BJ (cell line): ENCODE measurements at regions of chr2 and their contacts with region 1.

Region 1: GRCh38 chr2:231674587-231675338 is 33.6 kb upstream of the PTMA start:
- DNase-seq: no peak
- H3K4me3 ChIP-seq: no peak overlapping the region
- H3K27me3 ChIP-seq: no peaks in the 10 kb centered on the region
- CTCF ChIP-seq: peak; percentile 97

Region 2: GRCh38 chr2:231522799-231523180 is 152.0 kb before region 1 on chr2:
- CTCF ChIA-PET with region 1: no interaction called
- POLR2A ChIA-PET with region 1: no interaction called
- DNase-seq: no peak
- H3K4me3 ChIP-seq: no peak overlapping the region
- H3K27me3 ChIP-seq: peaks cover 7% of the 10 kb centered on the region
- CTCF ChIP-seq: no peak

Region 3: DNA sequence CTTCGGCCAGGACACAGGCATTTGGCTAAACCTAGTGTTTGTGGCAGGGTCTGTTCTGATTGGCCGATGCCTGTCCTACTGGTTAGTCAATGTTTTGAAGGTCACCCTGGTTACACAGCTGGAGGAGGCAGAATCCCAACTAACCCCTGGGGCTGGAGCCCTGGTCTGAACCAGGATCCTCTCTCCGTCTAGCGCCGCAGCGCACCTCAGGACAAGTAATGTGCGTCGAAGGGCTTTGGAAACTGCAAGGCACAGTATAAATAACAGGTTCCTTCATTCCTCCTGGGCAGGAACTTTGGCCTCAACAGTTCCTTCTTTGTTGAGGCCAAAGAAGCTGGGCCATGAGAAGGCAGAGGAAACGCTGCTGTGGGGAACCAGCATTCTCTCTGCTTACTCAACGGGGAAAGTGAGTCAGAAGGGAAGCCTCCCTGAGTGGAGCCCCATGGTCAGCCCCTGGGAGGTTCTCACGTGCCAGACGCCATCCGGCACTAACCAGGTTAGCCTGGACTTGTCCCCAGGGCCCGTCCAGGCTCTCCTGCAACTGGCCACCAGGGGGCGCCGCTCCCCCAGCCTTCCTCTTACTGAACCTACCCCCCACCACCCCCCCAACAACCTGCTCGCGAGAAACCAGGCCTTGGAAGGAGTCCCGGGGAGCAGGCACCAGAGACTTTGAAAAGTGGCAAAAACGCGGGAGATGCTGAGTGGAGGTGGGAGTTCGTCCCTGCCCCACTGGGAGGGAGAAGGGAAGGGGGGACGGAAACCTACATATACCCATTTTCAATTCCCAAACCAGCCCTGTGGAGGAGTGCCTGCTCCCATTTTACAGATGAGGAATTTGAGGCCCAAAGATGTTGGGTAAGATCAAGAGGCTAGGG is 62.3 kb before region 1 on chr2:
- CTCF ChIA-PET with region 1: interaction called, 409 read pairs
- POLR2A ChIA-PET with region 1: interaction called, 4 read pairs
- DNase-seq: peak; percentile 74
- H3K4me3 ChIP-seq: no peak overlapping the region
- H3K27me3 ChIP-seq: no peaks in the 10 kb centered on the region
- CTCF ChIP-seq: peak; percentile 97

Region 4: DNA sequence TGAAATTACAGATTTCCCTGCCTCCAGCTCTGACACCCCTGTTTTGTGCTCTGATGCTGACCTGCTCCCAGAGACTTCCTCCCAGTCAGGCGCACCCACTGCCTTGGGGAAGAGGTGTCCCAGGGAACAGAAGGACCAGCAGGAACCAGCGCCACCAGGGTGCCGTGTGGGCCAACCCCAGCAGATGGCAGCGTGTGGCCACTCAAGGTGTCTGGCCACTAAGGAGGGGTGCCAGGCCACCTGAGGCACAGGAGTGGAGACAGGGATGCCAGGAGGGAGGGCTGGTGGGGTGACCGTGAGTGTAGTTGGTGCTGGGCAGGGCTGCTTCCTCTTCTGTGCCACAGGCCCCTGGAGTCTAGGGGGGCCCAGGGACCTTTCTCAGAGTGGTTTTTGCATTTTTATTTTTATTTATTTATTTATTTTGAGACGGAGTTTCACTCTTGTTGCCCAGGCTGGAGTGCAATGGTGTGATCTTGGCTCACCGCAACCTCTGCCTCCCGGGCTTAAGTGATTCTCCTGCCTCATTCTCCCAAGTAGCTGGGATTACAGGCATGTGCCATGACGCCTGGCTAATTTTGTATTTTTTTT is 26.1 kb before region 1 on chr2:
- CTCF ChIA-PET with region 1: interaction called, 117 read pairs
- POLR2A ChIA-PET with region 1: no interaction called
- DNase-seq: no peak
- H3K4me3 ChIP-seq: no peak overlapping the region
- H3K27me3 ChIP-seq: no peaks in the 10 kb centered on the region
- CTCF ChIP-seq: peak; percentile 72

Region 5: GRCh38 chr2:231687133-231687852 is 12.5 kb after region 1 on chr2:
- CTCF ChIA-PET with region 1: interaction called, 19 read pairs
- POLR2A ChIA-PET with region 1: no interaction called
- DNase-seq: no peak
- H3K4me3 ChIP-seq: no peak overlapping the region
- H3K27me3 ChIP-seq: no peaks in the 10 kb centered on the region
- CTCF ChIP-seq: peak; percentile 73

Region 6: DNA sequence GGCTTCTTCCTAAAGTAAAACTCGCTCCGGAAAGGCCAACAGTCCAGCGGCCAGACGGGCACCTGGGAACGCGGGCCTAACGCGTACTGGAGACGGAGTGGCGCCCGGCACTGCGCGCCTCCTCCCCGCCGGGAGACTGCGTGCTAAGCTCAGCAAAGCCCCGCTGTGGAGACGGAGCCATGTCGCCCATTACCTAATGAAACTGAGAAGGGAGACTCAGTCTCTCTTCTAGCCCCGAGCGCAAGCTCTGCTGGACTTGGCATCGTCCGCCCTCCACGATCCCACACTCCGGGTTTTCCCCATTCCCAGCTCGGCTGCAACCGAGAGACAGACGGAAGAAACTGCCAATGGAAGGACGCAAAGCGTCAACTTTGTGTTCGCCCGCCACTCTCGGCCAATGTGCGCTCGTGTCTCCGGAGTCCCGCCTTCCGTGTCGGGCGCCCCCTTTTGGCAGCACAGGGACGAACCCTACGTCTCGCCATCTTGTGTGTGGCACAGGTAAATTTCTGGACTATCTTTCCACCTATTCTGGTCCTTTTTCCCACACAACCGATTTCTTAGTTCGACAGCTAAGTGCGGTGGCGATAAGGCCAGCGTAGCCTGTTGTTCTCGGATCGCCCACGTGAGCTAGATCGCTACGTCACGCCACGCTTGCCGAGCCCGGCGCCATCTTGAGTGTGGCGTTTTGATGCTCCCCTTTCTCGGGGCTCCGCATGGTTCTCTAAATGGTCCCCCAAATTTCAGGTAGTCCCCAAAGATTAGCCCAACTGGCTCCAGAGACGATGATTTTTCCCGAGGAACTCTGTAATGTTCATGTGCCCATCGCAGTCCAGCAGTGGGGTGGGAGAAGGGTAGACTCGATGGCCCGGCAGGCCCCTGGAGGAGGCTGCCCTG is 32.2 kb after region 1 on chr2:
- CTCF ChIA-PET with region 1: interaction called, 719 read pairs
- POLR2A ChIA-PET with region 1: interaction called, 15 read pairs
- DNase-seq: peak; percentile 81
- H3K4me3 ChIP-seq: peak overlapping the region; percentile 58
- H3K27me3 ChIP-seq: no peaks in the 10 kb centered on the region
- CTCF ChIP-seq: peak; percentile 95

Region 7: GRCh38 chr2:231720987-231721966 is 46.5 kb after region 1 on chr2:
- CTCF ChIA-PET with region 1: interaction called, 719 read pairs
- POLR2A ChIA-PET with region 1: no interaction called
- DNase-seq: no peak
- H3K4me3 ChIP-seq: no peak overlapping the region
- H3K27me3 ChIP-seq: no peaks in the 10 kb centered on the region
- CTCF ChIP-seq: no peak